ENCODE measurements at regions of chr13 and their contacts with region 1.

Region 1: GRCh38 chr13:48595431-48596429 is 58.0 kb upstream of the CYSLTR2 start:
- DNase-seq: no peak
- H3K4me3 ChIP-seq: no peak overlapping the region
- H3K27ac ChIP-seq: no peak overlapping the region
- H3K4me1 ChIP-seq: no peaks in the 10 kb centered on the region
- H3K27me3 ChIP-seq: no peaks in the 10 kb centered on the region
- CTCF ChIP-seq: peak; percentile 72 to 78 (median 76)

Region 2: GRCh38 chr13:48749699-48750473 is 154.2 kb after region 1 on chr13:
- dilution Hi-C with region 1: loop called (anchors 10 kb)
- DNase-seq: peak; percentile 92
- H3K4me3 ChIP-seq: peak overlapping the region in 1 of 3 experiments; percentile 17
- H3K27ac ChIP-seq: peak overlapping the region; percentile 44
- H3K4me1 ChIP-seq: peaks cover 20% of the 10 kb centered on the region
- H3K27me3 ChIP-seq: no peaks in the 10 kb centered on the region
- CTCF ChIP-seq: peak; percentile 44 to 54 (median 47)